Activated naive CD4-positive, alpha-beta T cell treated with anti-CD3 and anti-CD28 coated beads for 36 hours (primary cell): ENCODE measurements at regions of chr12 and their contacts with region 1.

Region 1: DNA sequence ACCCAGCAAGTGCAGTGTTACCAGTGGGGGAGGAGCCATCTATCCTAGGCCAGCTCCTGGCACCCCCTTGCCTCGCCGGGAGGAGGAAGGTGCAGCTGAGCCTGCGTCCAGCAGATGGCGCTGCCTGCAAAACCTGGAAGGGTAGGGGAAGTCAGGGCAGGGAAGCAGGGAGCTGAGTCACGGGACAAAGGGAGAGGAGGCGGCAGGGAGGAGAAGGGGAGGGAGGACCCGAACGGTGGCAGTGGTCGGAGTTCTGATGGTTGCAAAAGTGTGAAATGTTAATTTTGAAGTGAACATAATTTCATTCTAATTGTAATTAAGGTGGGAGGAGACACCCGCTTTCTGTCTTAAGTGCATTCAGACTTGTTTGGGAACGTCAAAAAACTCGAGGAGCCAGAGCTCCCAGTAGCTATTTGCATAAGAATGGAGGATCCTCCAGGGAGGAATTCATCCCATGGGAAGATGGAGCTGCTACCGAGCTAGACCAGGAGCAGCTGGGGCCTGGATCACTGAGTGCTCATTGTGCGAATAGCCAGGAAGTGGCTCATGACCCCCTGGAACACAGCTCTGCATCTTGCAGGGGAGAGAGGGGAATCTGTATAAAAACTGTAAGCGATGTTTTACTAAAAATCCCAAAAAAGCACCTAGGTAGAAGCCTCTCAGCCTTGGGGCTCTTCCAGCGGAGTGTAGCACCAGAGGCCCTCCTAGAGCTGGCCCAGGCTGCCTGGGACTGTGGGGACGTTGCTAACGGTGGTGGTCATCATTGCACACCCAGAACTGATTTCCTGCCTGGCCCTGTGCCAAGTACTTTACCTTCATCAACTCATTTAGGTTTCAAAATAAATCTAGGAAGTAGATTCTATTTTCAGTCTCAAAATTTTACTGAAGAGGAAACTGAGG is 59.5 kb downstream of the EMP1 start:
- DNase-seq: peak; percentile 93
- H3K4me3 Mint-ChIP-seq: peak overlapping the region; percentile 11
- H3K27ac Mint-ChIP-seq: no peak overlapping the region
- H3K4me1 Mint-ChIP-seq: peaks cover 5% of the 10 kb centered on the region
- H3K27me3 Mint-ChIP-seq: no peaks in the 10 kb centered on the region

Region 2: GRCh38 chr12:12890815-12891645 is 365.0 kb before region 1 on chr12 and contains the start of gene GPRC5A:
- CTCF ChIA-PET with region 1: no interaction called
- intact Hi-C with region 1: no loop called
- DNase-seq: peak; percentile 68
- H3K4me3 Mint-ChIP-seq: peak within 1 kb of the TSS; percentile 82
- H3K27ac Mint-ChIP-seq: no peak within 1 kb of the TSS
- H3K4me1 Mint-ChIP-seq: peaks cover 16% of the 10 kb centered on the region
- H3K27me3 Mint-ChIP-seq: peaks cover 14% of the 10 kb centered on the region
- total RNA-seq, gene GPRC5A: 0.24 to 0.64 TPM

Region 3: GRCh38 chr12:13211859-13212664 is 44.0 kb before region 1 on chr12:
- CTCF ChIA-PET with region 1: interaction called, 18 read pairs
- intact Hi-C with region 1: no loop called
- DNase-seq: peak; percentile 86
- H3K4me3 Mint-ChIP-seq: no peak overlapping the region
- H3K27ac Mint-ChIP-seq: no peak overlapping the region
- H3K4me1 Mint-ChIP-seq: peaks cover 20% of the 10 kb centered on the region
- H3K27me3 Mint-ChIP-seq: peaks cover 2% of the 10 kb centered on the region

Region 4: GRCh38 chr12:13278249-13278787 is 22.3 kb after region 1 on chr12:
- CTCF ChIA-PET with region 1: interaction called, 26 read pairs
- intact Hi-C with region 1: loop called (anchors 1 kb)
- DNase-seq: peak; percentile 67
- H3K4me3 Mint-ChIP-seq: no peak overlapping the region
- H3K27ac Mint-ChIP-seq: no peak overlapping the region
- H3K4me1 Mint-ChIP-seq: peaks cover 3% of the 10 kb centered on the region
- H3K27me3 Mint-ChIP-seq: peaks cover 27% of the 10 kb centered on the region

Region 5: GRCh38 chr12:13347241-13348043 is 91.4 kb after region 1 on chr12:
- CTCF ChIA-PET with region 1: interaction called, 7 read pairs
- intact Hi-C with region 1: loop called (anchors 5 kb)
- DNase-seq: peak; percentile 68
- H3K4me3 Mint-ChIP-seq: no peak overlapping the region
- H3K27ac Mint-ChIP-seq: peak overlapping the region; percentile 36
- H3K4me1 Mint-ChIP-seq: peaks cover 6% of the 10 kb centered on the region
- H3K27me3 Mint-ChIP-seq: peaks cover 15% of the 10 kb centered on the region

Region 6: DNA sequence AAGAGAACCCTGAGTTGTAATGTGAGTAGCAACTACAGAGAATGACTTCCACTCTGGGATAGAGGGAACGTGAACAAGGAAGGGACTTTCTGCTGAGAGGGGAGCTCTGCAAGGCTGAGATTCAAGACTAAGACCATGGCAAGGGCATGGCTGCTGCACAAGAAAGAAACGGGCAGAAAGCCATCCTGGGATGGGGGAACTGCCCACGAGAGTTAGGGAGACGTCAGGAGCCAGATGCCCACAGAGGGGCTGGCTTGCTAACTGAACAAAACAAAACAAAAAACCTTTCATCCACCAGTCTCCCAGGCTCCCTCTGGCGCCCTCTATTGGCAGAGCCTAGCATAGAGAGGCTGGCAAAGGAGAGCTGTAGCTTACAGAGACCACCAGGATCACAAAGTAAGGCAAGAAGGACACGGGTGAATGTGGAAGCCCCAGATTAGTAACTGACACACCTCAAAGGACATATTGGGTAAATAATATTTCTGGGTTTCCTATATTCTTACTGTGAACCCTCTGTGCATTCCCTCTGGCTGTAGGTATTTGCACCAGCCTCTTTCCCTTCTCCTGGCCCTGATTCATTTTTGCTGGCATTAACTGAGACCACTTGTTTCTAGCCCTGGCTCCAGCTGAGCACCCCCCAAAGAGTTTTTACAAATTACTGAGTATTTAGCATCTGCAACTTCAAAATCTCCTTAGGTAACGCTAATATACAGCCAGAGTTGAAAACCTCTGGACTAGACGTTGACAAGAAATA is 278.8 kb after region 1 on chr12:
- CTCF ChIA-PET with region 1: no interaction called
- intact Hi-C with region 1: loop called (anchors 5 kb)
- DNase-seq: peak; percentile 65
- H3K4me3 Mint-ChIP-seq: no peak overlapping the region
- H3K27ac Mint-ChIP-seq: no peak overlapping the region
- H3K4me1 Mint-ChIP-seq: no peaks in the 10 kb centered on the region
- H3K27me3 Mint-ChIP-seq: peaks cover 12% of the 10 kb centered on the region

Region 7: GRCh38 chr12:13661005-13661887 is 405.2 kb after region 1 on chr12:
- CTCF ChIA-PET with region 1: interaction called, 8 read pairs
- intact Hi-C with region 1: loop called (anchors 1 kb)
- DNase-seq: peak; percentile 50
- H3K4me3 Mint-ChIP-seq: no peak overlapping the region
- H3K27ac Mint-ChIP-seq: no peak overlapping the region
- H3K4me1 Mint-ChIP-seq: no peaks in the 10 kb centered on the region
- H3K27me3 Mint-ChIP-seq: peaks cover 8% of the 10 kb centered on the region

Region 8: DNA sequence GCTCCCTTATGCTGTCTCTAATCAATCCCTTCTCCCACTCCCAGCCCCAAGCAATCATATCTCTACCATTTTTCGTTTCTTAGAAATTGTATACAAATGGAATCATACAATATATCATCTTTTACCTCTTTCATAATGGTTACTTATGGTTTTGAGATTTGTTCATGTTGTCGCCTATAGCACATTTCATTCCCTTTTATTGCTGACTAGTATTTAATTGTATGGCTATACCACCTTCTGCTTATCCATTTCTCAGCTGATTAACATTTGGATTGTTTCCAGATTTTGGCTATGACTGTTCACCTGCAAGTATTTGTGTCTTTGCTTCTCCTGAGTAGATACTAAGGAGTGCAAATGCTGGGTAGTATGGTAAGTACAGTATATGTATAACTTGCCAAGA is 762.0 kb after region 1 on chr12:
- CTCF ChIA-PET with region 1: no interaction called
- intact Hi-C with region 1: no loop called
- DNase-seq: no peak
- H3K4me3 Mint-ChIP-seq: no peak overlapping the region
- H3K27ac Mint-ChIP-seq: no peak overlapping the region
- H3K4me1 Mint-ChIP-seq: no peaks in the 10 kb centered on the region
- H3K27me3 Mint-ChIP-seq: no peaks in the 10 kb centered on the region

Region 9: DNA sequence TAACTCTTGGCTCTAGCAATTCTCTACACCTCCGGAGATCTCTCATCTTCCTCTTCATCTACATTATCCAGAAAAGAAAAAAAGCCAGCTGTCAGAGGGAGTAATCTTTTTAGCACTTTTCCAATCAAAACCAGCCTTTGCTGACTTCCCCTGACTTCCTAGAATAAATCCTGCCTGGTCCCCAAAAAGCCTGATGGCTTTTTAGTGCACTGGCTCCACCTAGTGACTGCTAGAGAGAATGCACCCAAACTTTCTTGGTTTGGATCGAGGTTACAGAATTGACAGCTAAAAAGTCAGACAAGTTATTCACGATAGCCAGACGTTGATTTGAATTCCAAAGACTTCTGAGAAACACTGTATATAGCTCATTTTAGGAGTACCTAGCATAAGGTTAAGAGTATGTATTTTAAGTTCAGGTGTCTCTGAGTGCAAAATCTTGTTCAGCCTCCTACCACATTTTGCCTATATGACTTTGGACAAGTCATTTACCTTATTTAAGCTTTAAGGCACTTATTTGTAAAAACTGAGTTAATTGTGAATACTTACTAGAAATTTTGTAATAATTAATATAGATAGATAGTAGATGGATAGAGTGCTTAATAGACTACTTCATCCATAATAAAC is 911.1 kb after region 1 on chr12:
- CTCF ChIA-PET with region 1: interaction called, 7 read pairs
- intact Hi-C with region 1: loop called (anchors 2 kb)
- DNase-seq: peak; percentile 59
- H3K4me3 Mint-ChIP-seq: no peak overlapping the region
- H3K27ac Mint-ChIP-seq: no peak overlapping the region
- H3K4me1 Mint-ChIP-seq: no peaks in the 10 kb centered on the region
- H3K27me3 Mint-ChIP-seq: peaks cover 4% of the 10 kb centered on the region